ENCODE measurements at regions of chr16 and their contacts with region 1.

Region 1: DNA sequence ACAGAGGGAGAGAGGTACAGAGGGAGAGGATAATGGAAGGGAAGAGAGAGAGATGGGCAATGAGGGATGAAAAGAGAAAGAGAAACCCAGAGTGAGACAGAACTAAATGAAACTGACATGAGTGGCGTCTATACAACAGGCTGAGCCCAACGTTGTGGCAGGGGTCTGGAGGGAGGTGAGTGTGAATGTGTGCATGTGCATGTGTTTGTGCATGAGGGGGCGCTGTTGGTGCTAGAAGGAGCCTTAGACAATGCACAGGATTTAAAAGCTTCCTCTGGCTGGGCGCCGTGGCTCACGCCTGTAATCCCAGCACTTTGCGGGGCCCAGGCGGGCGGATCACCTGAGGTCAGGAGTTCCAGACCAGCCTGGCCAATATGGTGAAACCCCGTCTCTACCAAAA is 454.8 kb upstream of the CDH11 start:
- DNase-seq: no peak
- H3K4me3 ChIP-seq: no peak overlapping the region
- H3K27ac ChIP-seq: no peak overlapping the region
- H3K4me1 ChIP-seq: no peaks in the 10 kb centered on the region
- H3K27me3 ChIP-seq: no peaks in the 10 kb centered on the region
- CTCF ChIP-seq: no peak

Region 2: DNA sequence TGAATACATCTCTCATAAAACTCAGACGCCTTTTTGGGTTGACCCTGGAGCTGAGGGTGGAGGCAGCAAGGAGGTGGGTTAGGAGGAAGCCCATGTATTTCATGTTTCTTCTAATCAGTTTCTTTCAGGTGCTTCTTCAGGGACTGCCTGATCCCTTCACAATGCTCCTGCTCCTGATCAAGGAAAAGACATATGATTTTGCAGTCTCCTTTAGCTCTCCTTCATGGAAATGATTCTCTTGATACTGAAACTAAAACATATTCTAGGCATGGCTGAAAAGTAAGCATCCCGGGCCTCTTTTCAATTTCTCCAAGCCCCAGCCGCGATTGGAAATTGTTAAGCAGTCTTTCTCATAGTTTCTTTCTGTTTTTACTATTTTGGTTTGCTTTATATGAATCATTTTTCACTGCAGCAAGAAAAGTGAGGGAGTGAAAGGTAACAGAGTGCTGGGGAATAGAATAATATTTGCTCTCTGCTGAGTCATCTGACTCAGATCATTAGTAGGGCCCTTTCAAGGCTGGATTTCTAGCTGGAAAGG is 1185.5 kb before region 1 on chr16:
- intact Hi-C with region 1: no loop called
- DNase-seq: no peak
- H3K4me3 ChIP-seq: peak overlapping the region; percentile 20 to 44
- H3K27ac ChIP-seq: peak overlapping the region; percentile 77 to 82
- H3K4me1 ChIP-seq: peaks cover 0 to 23% (median 12%) of the 10 kb centered on the region in 4 donors
- H3K27me3 ChIP-seq: no peaks in the 10 kb centered on the region
- CTCF ChIP-seq: no peak

Region 3: GRCh38 chr16:64808474-64808873 is 768.2 kb before region 1 on chr16:
- intact Hi-C with region 1: loop called (anchors 5 kb)
- DNase-seq: no peak
- H3K4me3 ChIP-seq: no peak overlapping the region
- H3K27ac ChIP-seq: no peak overlapping the region
- H3K4me1 ChIP-seq: peaks cover 0 to 13% (median 0%) of the 10 kb centered on the region in 4 donors
- H3K27me3 ChIP-seq: no peaks in the 10 kb centered on the region
- CTCF ChIP-seq: no peak

Measured in tibial artery (tissue), 4 donors.